GM10248 (cell line): ENCODE measurements at regions of chr3 and their contacts with region 1.

Region 1: DNA sequence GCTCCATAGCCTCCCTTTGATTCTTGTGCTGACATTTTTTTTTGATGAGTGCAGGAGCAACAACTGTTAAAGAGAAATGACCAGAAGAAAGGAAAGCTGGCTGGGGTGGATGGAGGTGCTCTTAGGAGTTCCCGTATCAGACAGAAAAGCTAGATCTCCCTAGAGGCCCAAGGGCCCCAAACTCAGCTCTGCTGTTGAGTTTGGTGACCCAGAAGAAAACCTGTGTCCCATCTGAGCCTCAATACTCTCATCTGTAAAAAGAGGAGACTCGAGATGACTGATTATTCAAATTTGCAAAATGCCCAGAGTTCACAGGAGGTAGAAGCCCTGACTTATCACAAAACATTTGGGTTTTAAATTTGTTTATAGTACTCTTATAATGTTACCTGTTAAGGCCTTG is 142.4 kb downstream of the TIGIT start:
- DNase-seq: no peak
- CTCF ChIP-seq: no peak

Region 2: DNA sequence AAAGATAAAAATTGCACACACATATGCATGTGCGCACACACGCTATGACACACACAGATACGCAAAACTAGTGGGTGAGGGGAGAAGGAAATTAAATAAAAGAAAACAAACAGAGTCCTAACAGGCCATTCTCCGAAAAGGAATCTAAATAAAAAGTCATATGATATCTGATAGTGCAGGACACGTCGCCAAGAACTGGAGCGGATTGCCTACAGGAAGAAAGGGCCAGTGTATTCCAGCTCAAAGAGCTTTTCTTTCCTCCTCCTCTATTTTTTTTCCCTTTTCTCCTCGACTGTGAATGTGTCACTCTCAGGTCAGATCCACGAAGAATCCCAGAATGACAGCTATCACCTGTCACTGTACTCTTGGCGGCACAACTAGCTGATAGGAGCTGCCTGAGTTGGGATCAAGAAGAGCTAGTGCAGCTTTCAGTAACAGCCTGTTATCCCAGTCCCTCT is 15.4 kb after region 1 on chr3:
- CTCF ChIA-PET with region 1: interaction called, 13 read pairs
- POLR2A ChIA-PET with region 1: no interaction called
- DNase-seq: no peak
- CTCF ChIP-seq: no peak

Region 3: GRCh38 chr3:114498779-114499370 is 62.7 kb after region 1 on chr3:
- CTCF ChIA-PET with region 1: no interaction called
- POLR2A ChIA-PET with region 1: no interaction called
- DNase-seq: no peak
- CTCF ChIP-seq: no peak